CD8-positive, alpha-beta memory T cell (primary cell): ENCODE measurements at regions of chr11 and their contacts with region 1.

Region 1: GRCh38 chr11:118689851-118690552 is 10.6 kb upstream of the TREH start:
- DNase-seq: peak; percentile 69 to 89 (median 82)
- H3K4me3 ChIP-seq: peak overlapping the region; percentile 71
- H3K4me3 Mint-ChIP-seq: peak overlapping the region; percentile 18 to 90 (median 68)
- H3K27ac ChIP-seq: no peak overlapping the region
- H3K27ac Mint-ChIP-seq: peak overlapping the region in 7 of 8 donors; percentile 42 to 98 (median 79)
- H3K4me1 ChIP-seq: peaks cover 48% of the 10 kb centered on the region
- H3K4me1 Mint-ChIP-seq: peaks cover 50 to 56% (median 56%) of the 10 kb centered on the region in 3 donors
- H3K27me3 ChIP-seq: peaks cover 4% of the 10 kb centered on the region
- H3K27me3 Mint-ChIP-seq: peaks cover 0 to 5% of the 10 kb centered on the region in 2 donors

Region 2: GRCh38 chr11:118746988-118747585 is 57.1 kb after region 1 on chr11:
- CTCF ChIA-PET with region 1: interaction called, 11 read pairs
- POLR2A ChIA-PET with region 1: interaction called, 3 read pairs
- DNase-seq: no peak
- H3K4me3 ChIP-seq: no peak overlapping the region
- H3K4me3 Mint-ChIP-seq: no peak overlapping the region
- H3K27ac ChIP-seq: no peak overlapping the region
- H3K27ac Mint-ChIP-seq: peak overlapping the region in 6 of 8 donors; percentile 23 to 68 (median 46)
- H3K4me1 ChIP-seq: no peaks in the 10 kb centered on the region
- H3K4me1 Mint-ChIP-seq: peaks cover 9 to 27% (median 13%) of the 10 kb centered on the region in 3 donors
- H3K27me3 ChIP-seq: no peaks in the 10 kb centered on the region
- H3K27me3 Mint-ChIP-seq: no peaks in the 10 kb centered on the region

Region 3: GRCh38 chr11:118771547-118772288 is 81.7 kb after region 1 on chr11:
- CTCF ChIA-PET with region 1: interaction called, 20 read pairs
- POLR2A ChIA-PET with region 1: no interaction called
- DNase-seq: no peak
- H3K4me3 ChIP-seq: no peak overlapping the region
- H3K4me3 Mint-ChIP-seq: peak overlapping the region; percentile 2 to 70 (median 64)
- H3K27ac ChIP-seq: no peak overlapping the region
- H3K27ac Mint-ChIP-seq: peak overlapping the region; percentile 34 to 89 (median 72)
- H3K4me1 ChIP-seq: peaks cover 88% of the 10 kb centered on the region
- H3K4me1 Mint-ChIP-seq: peaks cover 82 to 97% (median 95%) of the 10 kb centered on the region in 3 donors
- H3K27me3 ChIP-seq: no peaks in the 10 kb centered on the region
- H3K27me3 Mint-ChIP-seq: no peaks in the 10 kb centered on the region

Region 4: DNA sequence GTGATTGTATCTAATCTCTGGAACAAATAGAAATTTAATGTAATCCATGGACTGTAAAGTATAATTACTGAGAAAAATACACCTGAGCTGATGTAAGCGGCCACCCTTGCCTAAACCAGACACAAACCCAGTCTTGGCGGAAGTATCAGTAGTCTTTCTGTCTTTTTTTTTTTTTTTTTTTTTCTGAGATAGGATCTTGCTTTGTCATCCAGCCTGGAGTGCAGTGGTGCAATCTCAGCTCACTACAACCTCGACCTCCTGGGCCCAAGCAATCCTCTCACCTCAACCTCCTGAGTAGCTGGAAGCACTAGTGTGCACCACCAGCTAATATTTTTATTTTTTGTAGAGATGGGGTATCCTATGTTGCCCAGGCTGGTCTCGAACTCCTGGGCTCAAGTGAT is 188.2 kb after region 1 on chr11:
- CTCF ChIA-PET with region 1: interaction called, 5 read pairs
- POLR2A ChIA-PET with region 1: interaction called, 13 read pairs
- DNase-seq: peak in 1 of 5 donors; percentile 58
- H3K4me3 ChIP-seq: peak overlapping the region; percentile 11
- H3K4me3 Mint-ChIP-seq: peak overlapping the region in 3 of 7 donors; percentile 2 to 25 (median 24)
- H3K27ac ChIP-seq: no peak overlapping the region
- H3K27ac Mint-ChIP-seq: peak overlapping the region; percentile 77 to 99 (median 98)
- H3K4me1 ChIP-seq: peaks cover 89% of the 10 kb centered on the region
- H3K4me1 Mint-ChIP-seq: peaks cover 76 to 92% (median 90%) of the 10 kb centered on the region in 3 donors
- H3K27me3 ChIP-seq: no peaks in the 10 kb centered on the region
- H3K27me3 Mint-ChIP-seq: no peaks in the 10 kb centered on the region

Region 5: GRCh38 chr11:118928108-118928870 is 238.3 kb after region 1 on chr11:
- CTCF ChIA-PET with region 1: interaction called, 19 read pairs
- POLR2A ChIA-PET with region 1: interaction called, 8 read pairs
- DNase-seq: peak; percentile 90 to 98 (median 96)
- H3K4me3 ChIP-seq: peak overlapping the region; percentile 70
- H3K4me3 Mint-ChIP-seq: peak overlapping the region; percentile 83 to 100 (median 98)
- H3K27ac ChIP-seq: peak overlapping the region; percentile 96
- H3K27ac Mint-ChIP-seq: peak overlapping the region; percentile 92 to 100 (median 99)
- H3K4me1 ChIP-seq: peaks cover 31% of the 10 kb centered on the region
- H3K4me1 Mint-ChIP-seq: peaks cover 39 to 51% (median 41%) of the 10 kb centered on the region in 3 donors
- H3K27me3 ChIP-seq: no peaks in the 10 kb centered on the region
- H3K27me3 Mint-ChIP-seq: peaks cover 0 to 14% of the 10 kb centered on the region in 2 donors